Gastrocnemius medialis (tissue), 4 donors: ENCODE measurements at regions of chr12 and their contacts with region 1.

Region 1: GRCh38 chr12:110109037-110109836 is 14.9 kb upstream of the IFT81 start:
- DNase-seq: peak; percentile 97
- ATAC-seq: peak; percentile 93 to 96
- H3K4me3 ChIP-seq: peak overlapping the region; percentile 28 to 34 (median 33)
- H3K27ac ChIP-seq: peak overlapping the region; percentile 90 to 98 (median 94)
- H3K4me1 ChIP-seq: peaks cover 17 to 25% of the 10 kb centered on the region in 2 donors
- H3K27me3 ChIP-seq: no peaks in the 10 kb centered on the region
- CTCF ChIP-seq: peak in 3 of 5 experiments; percentile 22 to 74 (median 66)
- POLR2A ChIP-seq: peak in 1 of 2 donors; percentile 18

Region 2: GRCh38 chr12:108967869-108968540 is 1141.2 kb before region 1 on chr12:
- in situ Hi-C with region 1: no loop called
- intact Hi-C with region 1: no loop called
- DNase-seq: no peak
- ATAC-seq: no peak
- H3K4me3 ChIP-seq: no peak overlapping the region
- H3K27ac ChIP-seq: no peak overlapping the region
- H3K4me1 ChIP-seq: peaks cover 6 to 17% of the 10 kb centered on the region in 2 donors
- H3K27me3 ChIP-seq: no peaks in the 10 kb centered on the region
- CTCF ChIP-seq: peak in 1 of 5 experiments; percentile 31
- POLR2A ChIP-seq: no peak

Region 3: GRCh38 chr12:110042264-110042663 is 67.0 kb before region 1 on chr12:
- in situ Hi-C with region 1: no loop called
- intact Hi-C with region 1: loop called (anchors 2 kb)
- DNase-seq: peak; percentile 74 to 85
- ATAC-seq: peak; percentile 96 to 97
- H3K4me3 ChIP-seq: no peak overlapping the region
- H3K27ac ChIP-seq: peak overlapping the region; percentile 74 to 84 (median 80)
- H3K4me1 ChIP-seq: peaks cover 47 to 52% of the 10 kb centered on the region in 2 donors
- H3K27me3 ChIP-seq: no peaks in the 10 kb centered on the region
- CTCF ChIP-seq: no peak
- POLR2A ChIP-seq: no peak

Region 4: DNA sequence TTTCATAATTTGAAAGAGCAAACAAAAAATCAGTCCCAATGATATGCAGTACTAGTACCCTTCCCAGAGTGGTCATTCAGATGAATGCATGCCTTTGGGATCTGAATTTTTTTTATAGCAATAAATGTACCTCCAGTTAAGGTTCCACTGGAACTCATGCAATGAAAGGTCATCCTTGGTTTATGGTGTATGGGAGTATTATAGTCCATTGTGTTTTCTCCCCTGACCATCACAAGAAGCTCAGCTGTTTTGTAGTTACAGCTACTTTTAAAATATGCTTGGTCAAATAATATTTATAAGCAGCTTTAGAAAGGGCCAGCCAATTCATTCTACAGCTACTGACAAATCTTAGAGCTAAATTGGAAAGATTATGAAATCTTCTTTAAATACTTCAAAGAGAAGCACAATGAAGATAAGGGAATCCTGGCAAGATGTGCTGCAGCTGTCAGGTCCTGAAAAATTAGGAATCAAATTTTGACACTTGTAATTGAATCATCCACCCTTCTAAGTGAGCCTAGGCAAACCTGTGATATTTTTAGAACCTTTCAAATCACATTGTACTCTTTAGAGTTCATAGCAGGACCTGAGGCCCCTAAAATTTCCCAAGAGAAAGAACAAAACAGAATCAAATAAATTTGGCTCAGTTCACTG is 61.4 kb after region 1 on chr12:
- in situ Hi-C with region 1: no loop called
- intact Hi-C with region 1: loop called (anchors 2 kb)
- DNase-seq: peak; percentile 40 to 59
- ATAC-seq: peak; percentile 97 to 98
- H3K4me3 ChIP-seq: no peak overlapping the region
- H3K27ac ChIP-seq: peak overlapping the region; percentile 73 to 82 (median 80)
- H3K4me1 ChIP-seq: peaks cover 30 to 37% of the 10 kb centered on the region in 2 donors
- H3K27me3 ChIP-seq: no peaks in the 10 kb centered on the region
- CTCF ChIP-seq: no peak
- POLR2A ChIP-seq: no peak

Region 5: GRCh38 chr12:110224379-110225304 is 115.4 kb after region 1 on chr12:
- in situ Hi-C with region 1: loop called in 1 of 4 experiments (anchors 10 kb)
- intact Hi-C with region 1: loop called (anchors 2 kb)
- DNase-seq: peak; percentile 36 to 44
- ATAC-seq: peak; percentile 81 to 91
- H3K4me3 ChIP-seq: peak overlapping the region; percentile 4 to 34 (median 18)
- H3K27ac ChIP-seq: peak overlapping the region; percentile 75 to 82 (median 80)
- H3K4me1 ChIP-seq: peaks cover 25 to 41% of the 10 kb centered on the region in 2 donors
- H3K27me3 ChIP-seq: no peaks in the 10 kb centered on the region
- CTCF ChIP-seq: peak in 4 of 5 experiments; percentile 53 to 76 (median 62)
- POLR2A ChIP-seq: no peak

Region 6: DNA sequence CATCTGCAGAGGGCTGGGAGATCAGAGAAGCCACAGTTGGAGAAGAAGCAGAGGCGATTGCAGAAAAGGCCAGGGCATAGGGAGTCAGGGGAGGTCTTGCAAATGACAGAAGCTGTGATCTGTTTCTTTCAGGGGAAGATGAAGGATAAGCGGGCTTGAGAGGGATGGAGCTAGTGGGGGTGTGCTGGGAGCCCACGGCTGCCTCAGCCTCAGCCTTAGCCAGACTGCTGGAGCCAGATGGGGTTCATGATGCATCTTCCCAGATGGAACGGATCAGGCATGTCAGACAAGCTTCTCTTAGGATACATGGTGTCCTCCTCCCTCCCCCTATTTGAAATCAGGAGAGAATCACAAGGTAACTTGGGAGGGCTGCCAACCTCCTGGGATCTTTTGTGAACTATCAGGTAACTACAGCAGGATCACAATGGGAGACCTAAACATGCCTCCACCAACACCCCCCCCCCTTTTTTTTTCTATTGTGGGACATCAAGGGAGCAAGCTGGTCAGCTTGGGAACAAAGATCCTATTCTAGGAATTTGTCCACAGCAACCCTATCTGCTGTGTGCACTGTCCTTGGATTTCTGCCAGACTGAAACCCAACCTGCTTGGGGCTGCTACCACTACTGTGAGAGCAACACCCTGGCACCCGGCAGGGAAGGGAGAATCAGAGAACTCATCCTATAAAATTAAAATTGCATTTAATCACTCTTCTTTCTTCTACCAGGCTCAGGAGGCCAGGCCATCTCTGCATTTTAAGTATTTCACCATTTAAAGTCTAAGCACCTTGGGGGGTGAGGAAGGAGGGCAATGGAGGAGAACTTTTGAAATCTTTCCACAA is 161.1 kb after region 1 on chr12:
- in situ Hi-C with region 1: no loop called
- intact Hi-C with region 1: loop called (anchors 1 kb)
- DNase-seq: peak; percentile 87 to 94
- ATAC-seq: peak; percentile 79 to 86
- H3K4me3 ChIP-seq: peak overlapping the region in 1 of 4 donors; percentile 18
- H3K27ac ChIP-seq: peak overlapping the region; percentile 82 to 91 (median 88)
- H3K4me1 ChIP-seq: peaks cover 45 to 58% of the 10 kb centered on the region in 2 donors
- H3K27me3 ChIP-seq: no peaks in the 10 kb centered on the region
- CTCF ChIP-seq: no peak
- POLR2A ChIP-seq: peak; percentile 51 to 52